CD4-positive, alpha-beta memory T cell (primary cell): ENCODE measurements at regions of chr12 and their contacts with region 1.

Region 1: DNA sequence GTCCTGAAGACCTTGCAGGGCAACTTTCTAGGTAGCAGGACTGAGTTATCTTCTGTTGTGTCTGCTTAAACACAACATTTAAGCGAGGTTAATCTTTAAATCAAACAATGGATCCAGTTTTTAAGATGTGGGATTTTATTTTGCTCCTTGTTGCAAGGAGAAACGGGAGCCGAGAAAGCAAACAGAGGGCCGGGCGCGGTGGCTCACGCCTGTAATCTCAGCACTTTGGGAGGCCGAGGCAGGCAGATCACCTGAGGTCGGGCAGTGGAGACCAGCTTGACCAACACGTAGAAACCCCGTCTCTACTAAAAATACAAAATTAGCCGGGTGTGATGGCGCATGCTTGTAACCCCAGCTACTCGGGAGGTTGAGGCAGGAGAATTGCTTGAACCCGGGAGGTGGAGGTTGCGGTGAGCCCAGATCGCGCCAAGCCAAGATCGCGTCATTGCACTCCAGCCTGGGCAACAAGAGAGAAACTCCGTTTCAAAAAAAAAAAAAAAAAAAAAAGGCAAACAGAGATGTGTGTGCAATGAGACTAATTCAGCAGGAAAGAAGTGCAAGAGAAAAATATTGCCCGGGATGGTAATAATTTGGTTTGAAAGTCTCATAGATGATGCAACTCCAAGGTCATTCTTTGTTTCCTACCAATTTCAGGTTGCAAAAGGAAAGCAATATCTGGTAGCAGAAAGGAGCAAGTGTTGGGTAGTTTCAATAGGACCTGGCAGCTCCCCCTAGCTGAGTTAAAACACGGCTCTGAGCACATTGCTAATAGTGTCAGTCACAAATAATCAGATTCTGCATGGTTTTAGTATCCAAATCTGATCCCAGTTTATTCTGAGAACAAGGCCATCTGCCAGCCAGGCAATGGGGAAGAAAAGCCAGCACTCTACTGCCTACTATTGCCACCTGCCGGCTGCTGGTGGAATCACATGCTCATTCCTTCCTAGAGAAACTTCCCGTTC is 141.4 kb downstream of the PPM1H start:
- DNase-seq: peak; percentile 51 to 69 (median 66)
- H3K4me3 ChIP-seq: no peak overlapping the region
- H3K4me3 Mint-ChIP-seq: no peak overlapping the region
- H3K27ac ChIP-seq: no peak overlapping the region
- H3K27ac Mint-ChIP-seq: no peak overlapping the region
- H3K4me1 ChIP-seq: no peaks in the 10 kb centered on the region
- H3K4me1 Mint-ChIP-seq: peaks cover 0 to 2% (median 0%) of the 10 kb centered on the region in 4 donors
- H3K27me3 ChIP-seq: no peaks in the 10 kb centered on the region
- H3K27me3 Mint-ChIP-seq: peaks cover 3 to 5% of the 10 kb centered on the region in 2 donors

Region 2: GRCh38 chr12:62522984-62523383 is 270.6 kb before region 1 on chr12:
- CTCF ChIA-PET with region 1: interaction called, 5 read pairs
- POLR2A ChIA-PET with region 1: no interaction called
- intact Hi-C with region 1: loop called (anchors 1 kb)
- DNase-seq: no peak
- H3K4me3 ChIP-seq: no peak overlapping the region
- H3K4me3 Mint-ChIP-seq: no peak overlapping the region
- H3K27ac ChIP-seq: no peak overlapping the region
- H3K27ac Mint-ChIP-seq: peak overlapping the region in 3 of 7 donors; percentile 3 to 67 (median 42)
- H3K4me1 ChIP-seq: peaks cover 25% of the 10 kb centered on the region
- H3K4me1 Mint-ChIP-seq: peaks cover 18 to 37% (median 25%) of the 10 kb centered on the region in 4 donors
- H3K27me3 ChIP-seq: no peaks in the 10 kb centered on the region
- H3K27me3 Mint-ChIP-seq: no peaks in the 10 kb centered on the region

Region 3: DNA sequence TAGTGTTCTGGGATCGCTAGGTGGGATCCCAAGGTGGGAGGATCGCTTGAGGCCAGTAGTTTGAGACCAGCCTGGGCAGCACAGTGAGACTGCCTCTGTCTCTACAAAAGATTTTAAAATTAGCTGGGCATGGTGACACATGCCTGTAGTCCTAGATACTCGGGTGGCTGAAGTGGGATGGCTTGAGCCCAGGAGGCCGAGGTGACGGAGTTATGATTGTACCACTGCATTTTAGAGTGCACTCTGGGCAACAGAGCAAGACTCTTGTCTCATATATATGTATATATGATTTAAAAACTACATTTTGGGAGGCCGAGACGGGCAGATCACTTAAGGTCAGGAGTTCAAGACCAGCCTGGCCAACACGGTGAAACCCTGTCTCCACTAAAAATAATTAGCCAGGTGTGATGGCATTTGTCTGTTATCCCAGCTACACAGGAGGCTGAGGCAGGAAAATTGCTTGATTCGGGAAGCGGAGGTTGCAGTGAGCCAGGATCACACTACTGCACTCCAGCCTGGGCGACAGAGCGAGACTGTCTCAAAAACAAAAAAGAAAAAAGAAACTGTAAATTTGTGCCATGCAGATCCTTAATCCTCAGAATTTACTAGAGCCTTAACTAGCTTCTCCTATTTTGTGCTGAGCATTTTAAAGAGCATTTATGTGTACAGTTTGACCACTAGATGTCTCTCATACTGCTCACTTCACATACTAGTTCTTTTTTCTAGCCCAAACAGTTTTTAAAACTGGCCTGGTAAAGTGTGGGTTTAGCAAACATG is 212.1 kb before region 1 on chr12:
- CTCF ChIA-PET with region 1: interaction called, 253 read pairs
- POLR2A ChIA-PET with region 1: interaction called, 8 read pairs
- intact Hi-C with region 1: loop called (anchors 1 kb)
- DNase-seq: peak in 4 of 5 donors; percentile 34 to 49 (median 38)
- H3K4me3 ChIP-seq: no peak overlapping the region
- H3K4me3 Mint-ChIP-seq: no peak overlapping the region
- H3K27ac ChIP-seq: no peak overlapping the region
- H3K27ac Mint-ChIP-seq: no peak overlapping the region
- H3K4me1 ChIP-seq: no peaks in the 10 kb centered on the region
- H3K4me1 Mint-ChIP-seq: peaks cover 0 to 2% (median 0%) of the 10 kb centered on the region in 4 donors
- H3K27me3 ChIP-seq: no peaks in the 10 kb centered on the region
- H3K27me3 Mint-ChIP-seq: no peaks in the 10 kb centered on the region

Region 4: DNA sequence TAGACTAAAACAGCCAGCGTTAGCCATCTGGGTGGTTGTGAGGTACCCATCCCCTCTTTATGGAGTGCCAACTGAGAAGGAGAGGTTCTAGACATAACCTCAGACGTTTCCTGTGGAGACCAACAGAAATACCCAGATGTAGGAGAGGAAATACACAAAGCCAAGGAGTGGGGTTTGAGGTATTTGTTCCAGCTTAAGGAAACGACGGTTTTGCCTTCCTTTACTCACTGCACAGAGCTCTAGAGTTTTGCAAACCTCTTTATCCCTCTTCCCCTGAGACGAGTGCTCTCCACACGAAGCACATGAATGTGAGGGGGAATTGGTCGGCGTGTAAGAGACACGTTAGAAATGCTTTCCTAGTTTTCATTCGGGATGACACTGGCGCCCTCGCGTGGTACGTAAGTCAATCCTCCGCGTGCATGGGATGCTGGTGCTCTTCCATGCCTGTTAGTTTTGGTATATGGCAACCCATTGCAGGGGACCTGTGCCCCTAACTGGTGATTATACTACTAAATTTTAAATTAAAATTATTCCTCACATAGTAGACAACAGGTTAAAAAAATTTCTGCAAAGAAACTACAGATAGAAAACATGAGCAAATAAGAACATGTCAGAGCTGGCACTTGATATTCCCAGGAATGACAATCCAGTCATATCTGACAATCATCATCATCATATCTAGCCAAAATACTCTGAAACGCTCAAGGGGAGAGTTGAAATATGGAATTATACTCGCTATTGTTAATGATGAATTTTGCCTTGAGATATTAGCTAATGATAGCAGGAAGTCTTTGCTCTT is 19.7 kb after region 1 on chr12:
- CTCF ChIA-PET with region 1: interaction called, 41 read pairs
- POLR2A ChIA-PET with region 1: no interaction called
- intact Hi-C with region 1: no loop called
- DNase-seq: peak in 2 of 5 donors; percentile 5
- H3K4me3 ChIP-seq: no peak overlapping the region
- H3K4me3 Mint-ChIP-seq: peak overlapping the region in 6 of 8 donors; percentile 31 to 72 (median 49)
- H3K27ac ChIP-seq: no peak overlapping the region
- H3K27ac Mint-ChIP-seq: peak overlapping the region in 1 of 7 donors; percentile 70
- H3K4me1 ChIP-seq: peaks cover 10% of the 10 kb centered on the region
- H3K4me1 Mint-ChIP-seq: peaks cover 5 to 12% (median 9%) of the 10 kb centered on the region in 4 donors
- H3K27me3 ChIP-seq: peaks cover 6% of the 10 kb centered on the region
- H3K27me3 Mint-ChIP-seq: peaks cover 11 to 17% of the 10 kb centered on the region in 2 donors

Region 5: DNA sequence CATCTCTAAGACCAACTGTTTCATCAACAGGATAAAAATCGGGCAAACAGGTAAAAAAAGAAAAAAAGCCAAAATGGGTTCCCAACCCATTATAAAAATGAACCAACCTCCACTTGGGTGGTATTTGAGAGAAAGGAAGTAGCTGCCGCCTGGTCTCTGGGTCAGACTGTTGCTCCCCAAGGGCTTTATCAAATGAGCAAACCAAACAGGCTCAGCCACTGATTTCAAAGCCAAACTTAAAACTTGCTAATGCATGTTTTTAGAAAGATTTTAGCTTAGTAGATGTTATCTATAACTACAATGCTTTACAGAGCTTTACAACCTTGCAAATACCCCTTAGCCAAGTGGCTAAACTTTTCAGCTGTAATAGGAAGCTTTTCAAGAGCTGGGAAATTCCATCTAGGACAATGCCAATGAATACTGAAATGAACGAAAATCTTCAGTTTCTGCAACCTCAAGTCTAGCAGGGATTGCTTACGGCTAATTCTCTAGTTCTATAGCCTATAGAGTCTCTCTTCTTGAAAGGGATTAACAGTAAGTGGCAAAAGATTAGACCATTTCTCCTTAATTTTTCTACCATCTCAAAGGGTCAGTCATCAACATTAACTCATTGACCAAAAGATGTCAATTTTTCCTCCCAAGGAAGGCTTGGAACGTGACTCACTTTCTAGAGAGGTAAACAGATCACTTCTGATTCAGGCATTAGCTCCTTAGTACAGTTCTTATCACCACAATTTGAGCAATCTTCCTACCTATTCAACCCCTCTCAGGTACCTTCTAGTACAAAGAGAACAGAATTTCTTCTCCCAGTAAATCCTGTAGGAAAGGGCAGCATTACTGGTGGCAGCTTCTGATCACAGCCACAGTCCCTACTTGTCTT is 137.2 kb after region 1 on chr12:
- CTCF ChIA-PET with region 1: no interaction called
- POLR2A ChIA-PET with region 1: no interaction called
- intact Hi-C with region 1: no loop called
- DNase-seq: no peak
- H3K4me3 ChIP-seq: no peak overlapping the region
- H3K4me3 Mint-ChIP-seq: no peak overlapping the region
- H3K27ac ChIP-seq: no peak overlapping the region
- H3K27ac Mint-ChIP-seq: no peak overlapping the region
- H3K4me1 ChIP-seq: peaks cover 20% of the 10 kb centered on the region
- H3K4me1 Mint-ChIP-seq: peaks cover 9 to 15% (median 13%) of the 10 kb centered on the region in 4 donors
- H3K27me3 ChIP-seq: peaks cover 12% of the 10 kb centered on the region
- H3K27me3 Mint-ChIP-seq: peaks cover 26 to 40% of the 10 kb centered on the region in 2 donors